Psoas muscle (tissue), 8 donors: ENCODE measurements at regions of chr9 and their contacts with region 1.

Region 1: GRCh38 chr9:106092083-106092482 is 397.7 kb downstream of the TMEM38B start:
- DNase-seq: no peak
- ATAC-seq: no peak
- H3K4me3 ChIP-seq: no peak overlapping the region
- H3K27ac ChIP-seq: no peak overlapping the region
- H3K4me1 ChIP-seq: no peaks in the 10 kb centered on the region
- H3K27me3 ChIP-seq: no peaks in the 10 kb centered on the region
- CTCF ChIP-seq: no peak

Region 2: DNA sequence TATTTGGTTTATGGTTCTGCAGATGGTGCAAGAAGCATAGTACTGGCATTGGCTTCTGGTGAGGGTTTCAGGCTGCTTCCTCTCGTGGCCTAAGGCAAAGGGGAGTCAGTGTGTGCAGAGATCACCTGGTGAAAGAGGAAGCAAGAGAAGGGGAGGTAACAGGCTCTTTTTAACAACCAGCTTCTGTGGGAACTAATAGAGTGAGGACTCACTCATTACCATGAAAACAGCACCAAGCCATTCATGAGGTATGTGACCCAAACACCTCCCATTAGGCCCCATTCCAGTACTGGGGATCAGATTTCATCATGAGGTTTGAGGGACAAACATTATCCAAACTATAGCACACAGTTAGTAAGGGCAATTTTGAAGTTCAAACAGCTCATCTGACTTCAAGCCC is 134.3 kb before region 1 on chr9:
- intact Hi-C with region 1: loop called in 1 of 2 experiments (anchors 10 kb)
- DNase-seq: no peak
- ATAC-seq: peak in 1 of 4 donors; percentile 54
- H3K4me3 ChIP-seq: no peak overlapping the region
- H3K27ac ChIP-seq: no peak overlapping the region
- H3K4me1 ChIP-seq: no peaks in the 10 kb centered on the region
- H3K27me3 ChIP-seq: no peaks in the 10 kb centered on the region
- CTCF ChIP-seq: no peak

Region 3: DNA sequence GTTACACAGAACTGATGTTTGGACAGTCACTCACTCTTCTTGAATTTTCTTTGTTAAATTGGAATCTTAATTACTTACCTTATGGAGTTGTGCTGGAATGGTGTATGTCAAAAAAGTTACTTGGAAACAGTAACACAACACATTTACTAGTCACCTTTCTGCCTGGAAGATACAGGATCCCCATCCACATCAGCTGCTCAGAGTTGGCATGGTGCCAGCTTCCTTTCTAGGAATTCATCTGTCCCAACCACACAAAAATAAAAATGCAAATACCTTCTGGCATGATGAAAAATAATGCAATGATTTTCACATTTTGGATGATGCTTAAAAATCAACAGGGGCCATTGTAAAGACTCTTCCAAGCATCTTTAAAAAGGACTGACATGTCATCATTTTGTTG is 56.3 kb before region 1 on chr9:
- intact Hi-C with region 1: loop called in 1 of 2 experiments (anchors 10 kb)
- DNase-seq: no peak
- ATAC-seq: no peak
- H3K4me3 ChIP-seq: no peak overlapping the region
- H3K27ac ChIP-seq: no peak overlapping the region
- H3K4me1 ChIP-seq: no peaks in the 10 kb centered on the region
- H3K27me3 ChIP-seq: no peaks in the 10 kb centered on the region
- CTCF ChIP-seq: no peak

Region 4: GRCh38 chr9:106111045-106111717 is 19.1 kb after region 1 on chr9:
- intact Hi-C with region 1: no loop called
- DNase-seq: no peak
- ATAC-seq: no peak
- H3K4me3 ChIP-seq: no peak overlapping the region
- H3K27ac ChIP-seq: no peak overlapping the region
- H3K4me1 ChIP-seq: no peaks in the 10 kb centered on the region
- H3K27me3 ChIP-seq: no peaks in the 10 kb centered on the region
- CTCF ChIP-seq: no peak